ENCODE measurements at regions of chr6 and their contacts with region 1.

Region 1: GRCh38 chr6:46491628-46492547 is 639 bp upstream of the RCAN2 start:
- DNase-seq: peak; percentile 49 to 97 (median 75)

Region 2: DNA sequence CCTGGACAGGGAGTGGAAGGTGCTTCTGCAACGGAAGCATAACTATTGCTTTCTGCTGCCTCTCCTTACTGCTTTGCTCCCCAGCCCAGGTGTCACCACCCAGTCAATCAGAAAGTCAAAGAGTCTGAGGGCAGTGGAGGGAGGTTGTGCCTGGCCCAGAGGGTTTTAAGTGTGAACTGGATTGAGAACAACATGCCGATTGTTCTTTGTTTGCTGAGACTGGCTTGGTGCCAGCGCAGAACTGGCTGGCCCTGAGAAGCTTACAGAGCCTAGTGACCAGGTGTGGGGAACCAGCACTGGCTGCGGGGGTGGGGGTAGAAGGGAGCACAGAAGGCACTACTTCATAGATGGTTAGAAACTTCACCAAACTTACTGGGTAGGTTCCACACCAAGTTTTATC is 393.2 kb before region 1 on chr6:
- intact Hi-C with region 1: loop called (anchors 5 kb)
- DNase-seq: peak; percentile 34 to 95 (median 74)

Region 3: GRCh38 chr6:46221222-46221793 is 270.6 kb before region 1 on chr6:
- intact Hi-C with region 1: loop called (anchors 1 kb)
- DNase-seq: no peak

Region 4: DNA sequence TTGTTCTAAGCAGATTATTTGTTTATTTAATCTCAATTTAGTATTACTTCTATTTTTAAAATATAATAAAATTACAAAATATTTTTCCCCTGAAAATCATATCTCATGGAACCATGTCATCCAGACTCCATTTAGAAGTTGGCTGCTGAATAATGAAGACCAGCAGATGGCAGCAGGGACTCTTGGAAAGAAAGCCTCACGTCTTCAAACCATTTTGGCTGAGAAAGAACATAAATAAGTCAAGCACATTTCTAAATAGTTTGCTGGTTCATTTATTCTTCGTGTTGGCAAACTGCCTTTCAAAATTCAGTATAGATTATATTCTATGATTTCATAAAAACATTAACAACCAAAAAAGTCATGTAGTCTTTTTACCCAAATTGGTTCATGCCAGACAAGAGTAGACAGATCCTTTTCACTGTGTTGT is 72.3 kb before region 1 on chr6:
- intact Hi-C with region 1: loop called (anchors 5 kb)
- DNase-seq: peak in 8 of 10 donors; percentile 32 to 89 (median 66)

Measured in posterior cingulate gyrus (tissue), 11 donors.